Activated T-helper 1 cell treated with anti-CD3 and anti-CD28 coated beads, Interleukin-12 subunit alpha, Interleukin-12 subunit beta, Interleukin-2, Interleukin-4 antibody, amounts not matched to agents 30 ng/mL and 10 ng/mL and 1 ng/mL, durations not matched to agents 14 hours and 24 hours and 36 hours (primary cell): ENCODE measurements at regions of chr11 and their contacts with region 1.

Region 1: GRCh38 chr11:34051349-34052035 is at the start of gene CAPRIN1:
- DNase-seq: peak; percentile 80
- H3K4me3 Mint-ChIP-seq: peak within 1 kb of the TSS; percentile 99
- H3K27ac Mint-ChIP-seq: peak within 1 kb of the TSS; percentile 97
- H3K4me1 Mint-ChIP-seq: peaks cover 8% of the 10 kb centered on the region
- H3K27me3 Mint-ChIP-seq: no peaks in the 10 kb centered on the region
- total RNA-seq, gene CAPRIN1: 285 and 289 TPM in 2 replicates

Region 2: DNA sequence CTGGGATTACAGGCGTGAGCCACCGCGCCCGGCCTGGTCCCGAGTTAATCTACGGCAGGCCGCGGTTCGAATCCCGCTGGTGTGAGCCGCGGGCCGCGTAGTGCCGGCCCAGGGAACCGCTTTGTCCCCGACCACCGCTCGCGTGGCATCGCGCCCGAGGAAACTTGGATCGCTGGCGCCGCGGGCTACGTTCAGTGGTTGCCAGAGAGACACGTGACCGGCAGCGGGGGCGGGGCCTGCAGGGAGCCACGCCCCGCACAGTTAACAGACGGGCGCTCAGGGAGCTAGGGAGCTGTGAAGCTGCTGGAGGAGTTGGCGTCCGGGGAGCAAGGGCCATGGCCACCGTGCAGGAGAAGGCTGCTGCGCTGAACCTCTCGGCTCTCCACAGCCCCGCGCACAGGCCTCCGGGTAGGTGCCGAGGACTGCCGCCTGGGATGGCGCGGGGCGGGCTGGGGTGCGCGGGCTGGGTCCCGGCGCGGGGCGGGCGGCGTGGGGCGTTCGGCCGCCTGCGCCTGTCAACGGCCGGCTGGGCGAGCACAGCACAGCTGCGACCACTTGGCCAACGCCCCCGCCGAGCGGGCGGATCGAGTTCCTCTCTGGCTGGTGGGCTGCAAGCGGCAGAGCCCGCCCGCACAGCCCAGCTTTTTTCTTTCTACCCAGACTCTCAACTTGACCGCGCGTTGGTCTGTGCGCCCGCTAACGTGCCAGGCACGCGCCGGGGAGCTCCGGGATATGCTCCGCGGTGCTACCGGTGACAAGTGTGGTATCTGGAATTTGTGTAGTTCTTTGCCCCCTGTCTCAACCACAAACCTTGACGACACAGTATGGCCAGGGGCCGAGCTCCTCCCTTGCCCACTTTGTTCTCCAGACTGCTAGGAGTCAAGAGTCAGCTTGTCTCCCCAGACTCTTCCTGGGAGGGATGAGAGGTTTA is 1035.6 kb before region 1 on chr11 and contains the start of gene DEPDC7:
- intact Hi-C with region 1: loop called (anchors 10 kb)
- DNase-seq: peak; percentile 66
- H3K4me3 Mint-ChIP-seq: peak within 1 kb of the TSS; percentile 79
- H3K27ac Mint-ChIP-seq: no peak within 1 kb of the TSS
- H3K4me1 Mint-ChIP-seq: peaks cover 18% of the 10 kb centered on the region
- H3K27me3 Mint-ChIP-seq: peaks cover 41% of the 10 kb centered on the region
- total RNA-seq, gene DEPDC7: 0.26 and 0.61 TPM in 2 replicates

Region 3: DNA sequence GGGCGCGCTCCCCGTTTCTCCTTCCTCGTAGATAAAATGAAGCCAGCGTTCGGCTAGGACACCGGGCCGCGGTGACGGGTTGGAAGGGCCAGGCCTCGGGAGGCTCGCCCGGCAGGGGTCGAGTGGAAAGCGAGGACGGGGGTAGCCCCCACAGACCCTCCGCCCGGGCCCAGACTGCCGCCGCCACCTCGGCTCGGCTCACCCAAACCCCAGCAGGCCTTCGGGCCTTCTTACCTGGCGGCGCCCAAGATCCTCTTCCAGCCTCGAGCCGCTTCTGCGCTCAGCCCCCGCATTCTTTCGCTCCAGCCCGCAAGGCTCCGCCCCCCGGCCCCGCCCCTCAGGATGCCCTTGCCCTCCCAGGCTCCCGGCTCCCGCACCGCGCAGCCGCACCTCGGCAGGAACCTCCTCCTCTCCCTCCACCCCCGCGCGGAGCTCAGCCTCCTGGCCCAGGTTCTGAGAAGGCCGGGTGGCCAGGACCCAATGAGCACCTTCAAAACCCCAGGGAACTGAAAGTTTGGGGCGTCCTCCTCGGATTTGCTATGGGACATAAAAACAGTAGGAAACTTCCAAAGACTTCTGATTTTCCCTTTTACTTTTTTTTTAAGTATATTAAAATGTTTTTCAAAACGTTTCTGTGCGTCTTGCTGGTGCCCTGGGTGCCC is 315.2 kb before region 1 on chr11 and contains the start of gene CD59:
- intact Hi-C with region 1: loop called (anchors 2 kb)
- DNase-seq: peak; percentile 83
- H3K4me3 Mint-ChIP-seq: peak within 1 kb of the TSS; percentile 87
- H3K27ac Mint-ChIP-seq: peak within 1 kb of the TSS; percentile 89
- H3K4me1 Mint-ChIP-seq: peaks cover 37% of the 10 kb centered on the region
- H3K27me3 Mint-ChIP-seq: peaks cover 3% of the 10 kb centered on the region
- total RNA-seq, gene CD59: 140 and 143 TPM in 2 replicates

Region 4: GRCh38 chr11:33893711-33894397 is 157.6 kb before region 1 on chr11:
- intact Hi-C with region 1: loop called (anchors 5 kb)
- DNase-seq: peak; percentile 38
- H3K4me3 Mint-ChIP-seq: no peak overlapping the region
- H3K27ac Mint-ChIP-seq: peak overlapping the region; percentile 16
- H3K4me1 Mint-ChIP-seq: peaks cover 22% of the 10 kb centered on the region
- H3K27me3 Mint-ChIP-seq: peaks cover 64% of the 10 kb centered on the region

Region 5: DNA sequence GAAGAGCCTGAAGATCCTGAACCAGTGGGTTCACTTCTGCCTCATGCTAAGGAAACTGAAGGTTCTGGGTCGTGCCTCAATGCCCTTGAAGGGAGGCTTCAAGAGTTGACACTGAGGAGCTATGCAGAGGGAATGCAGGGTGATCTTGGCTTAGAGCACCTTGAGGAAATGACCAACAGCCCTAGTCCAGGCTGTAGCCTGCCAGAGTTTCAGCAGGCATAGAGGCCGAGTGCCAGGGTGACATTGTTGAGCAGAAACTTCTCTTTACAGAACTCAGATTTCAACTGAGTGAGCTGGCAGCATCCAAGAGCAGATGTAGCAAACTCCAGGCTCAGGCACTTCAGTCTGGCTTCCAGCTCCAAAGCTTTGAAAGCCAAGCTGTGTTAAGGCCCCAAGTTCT is 23.1 kb before region 1 on chr11:
- intact Hi-C with region 1: no loop called
- DNase-seq: no peak
- H3K4me3 Mint-ChIP-seq: no peak overlapping the region
- H3K27ac Mint-ChIP-seq: no peak overlapping the region
- H3K4me1 Mint-ChIP-seq: no peaks in the 10 kb centered on the region
- H3K27me3 Mint-ChIP-seq: peaks cover 6% of the 10 kb centered on the region

Region 6: DNA sequence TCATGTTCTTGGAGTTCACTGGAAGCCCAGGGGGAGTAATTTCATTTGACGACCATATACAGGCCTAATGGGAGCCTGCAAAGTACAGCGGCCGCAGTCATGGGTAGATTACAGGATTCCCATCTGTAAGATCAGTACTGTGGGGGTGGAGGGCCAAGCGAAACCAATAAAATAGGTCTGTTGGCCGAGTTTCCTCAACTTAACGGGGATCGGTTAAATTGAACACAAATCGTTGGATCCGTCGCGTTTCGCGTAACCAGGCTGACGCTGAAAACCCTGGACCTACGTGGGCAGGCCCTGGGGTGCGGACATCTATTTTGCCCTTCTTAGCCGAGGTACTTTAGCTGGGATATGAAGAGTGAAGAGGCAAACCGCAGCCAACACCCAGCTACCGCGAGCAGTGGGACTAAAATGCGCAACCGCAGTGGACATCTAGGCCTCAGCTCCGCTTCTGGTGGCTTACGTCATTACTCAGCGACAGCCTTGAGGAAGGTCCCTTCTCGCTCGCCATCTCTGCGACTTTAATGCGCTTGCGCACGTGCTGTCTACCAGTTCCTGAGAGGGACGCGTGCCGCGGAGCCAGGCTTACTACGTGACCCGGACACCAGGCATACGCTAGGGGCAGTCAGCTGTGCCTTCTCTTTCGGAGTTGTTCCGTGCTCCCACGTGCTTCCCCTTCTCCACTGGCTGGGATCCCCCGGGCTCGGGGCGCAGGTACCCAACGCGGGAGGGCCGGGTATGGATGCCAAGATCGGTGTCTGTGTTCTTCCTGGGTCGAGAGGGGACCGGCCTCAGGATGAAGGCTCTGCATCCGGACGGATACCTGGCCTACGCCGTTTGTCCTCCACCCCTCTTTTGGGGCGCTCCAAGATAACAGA is 53.8 kb after region 1 on chr11 and contains the start of gene NAT10:
- intact Hi-C with region 1: loop called (anchors 1 kb)
- DNase-seq: peak; percentile 97
- H3K4me3 Mint-ChIP-seq: peak within 1 kb of the TSS; percentile 95
- H3K27ac Mint-ChIP-seq: peak within 1 kb of the TSS; percentile 90
- H3K4me1 Mint-ChIP-seq: peaks cover 48% of the 10 kb centered on the region
- H3K27me3 Mint-ChIP-seq: no peaks in the 10 kb centered on the region
- total RNA-seq, gene NAT10: 157 and 158 TPM in 2 replicates

Region 7: GRCh38 chr11:34243726-34244464 is 192.4 kb after region 1 on chr11:
- intact Hi-C with region 1: loop called (anchors 1 kb)
- DNase-seq: peak; percentile 36
- H3K4me3 Mint-ChIP-seq: peak overlapping the region; percentile 65
- H3K27ac Mint-ChIP-seq: peak overlapping the region; percentile 71
- H3K4me1 Mint-ChIP-seq: peaks cover 94% of the 10 kb centered on the region
- H3K27me3 Mint-ChIP-seq: peaks cover 11% of the 10 kb centered on the region